Breast epithelium (tissue), 4 donors: ENCODE measurements at regions of chr19 and their contacts with region 1.

Region 1: GRCh38 chr19:6021878-6022569 is 44.1 kb upstream of the RANBP3 start:
- DNase-seq: peak; percentile 48 to 68
- H3K4me3 ChIP-seq: no peak overlapping the region
- H3K27ac ChIP-seq: no peak overlapping the region
- H3K4me1 ChIP-seq: no peaks in the 10 kb centered on the region
- H3K27me3 ChIP-seq: no peaks in the 10 kb centered on the region
- CTCF ChIP-seq: peak; percentile 57 to 90 (median 73)
- POLR2A ChIP-seq: no peak

Region 2: GRCh38 chr19:5839065-5840017 is 182.7 kb before region 1 on chr19 and contains the start of gene FUT6:
- intact Hi-C with region 1: no loop called
- DNase-seq: no peak
- H3K4me3 ChIP-seq: no peak within 1 kb of the TSS
- H3K27ac ChIP-seq: no peak within 1 kb of the TSS
- H3K4me1 ChIP-seq: no peaks in the 10 kb centered on the region
- H3K27me3 ChIP-seq: no peaks in the 10 kb centered on the region
- CTCF ChIP-seq: no peak
- POLR2A ChIP-seq: no peak
- total RNA-seq, gene FUT6: 0.73 to 4.3 TPM in 2 of 3 donors, not detected in the other

Region 3: DNA sequence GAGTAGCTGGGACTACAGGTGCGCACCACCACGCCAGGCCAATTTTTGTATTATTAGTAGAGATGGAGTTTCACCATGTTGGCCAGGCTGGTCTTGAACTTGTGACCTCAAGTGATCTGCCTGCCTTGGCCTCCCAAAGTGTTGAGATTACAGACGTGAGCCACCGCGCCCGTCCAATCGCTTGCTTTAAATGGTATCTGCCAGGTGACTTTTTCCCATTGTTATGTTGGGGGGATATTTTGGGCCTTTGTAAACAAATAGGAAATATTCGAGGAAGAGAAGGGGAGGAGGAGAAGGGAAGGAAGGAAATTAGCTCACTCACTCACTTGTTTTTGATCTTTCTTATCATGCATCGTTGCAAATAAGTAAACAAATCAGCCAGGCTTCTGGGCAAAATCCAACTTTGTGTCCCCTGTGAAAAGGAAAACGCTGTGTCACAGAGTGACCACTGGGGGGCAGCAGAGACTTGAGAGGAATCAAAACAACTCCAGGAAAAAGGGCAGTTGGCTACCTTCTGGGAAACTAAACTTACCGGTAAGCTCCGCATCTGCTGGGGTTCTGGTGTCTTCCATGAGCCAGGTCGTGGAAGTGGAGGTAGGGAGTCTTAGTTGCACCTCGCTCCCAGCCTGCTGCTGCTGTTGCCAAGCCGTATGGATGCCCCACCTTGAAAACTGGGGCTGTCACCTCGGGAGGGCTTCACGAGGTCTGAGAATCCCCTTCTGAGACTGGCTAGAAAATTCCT is 34.8 kb before region 1 on chr19:
- intact Hi-C with region 1: loop called (anchors 5 kb)
- DNase-seq: peak; percentile 71 to 75
- H3K4me3 ChIP-seq: peak overlapping the region; percentile 34 to 64 (median 40)
- H3K27ac ChIP-seq: no peak overlapping the region
- H3K4me1 ChIP-seq: peaks cover 0 to 3% of the 10 kb centered on the region in 2 donors
- H3K27me3 ChIP-seq: no peaks in the 10 kb centered on the region
- CTCF ChIP-seq: peak; percentile 92 to 94 (median 93)
- POLR2A ChIP-seq: no peak